Esophagus muscularis mucosa (tissue), 4 donors: ENCODE measurements at regions of chr11 and their contacts with region 1.

Region 1: DNA sequence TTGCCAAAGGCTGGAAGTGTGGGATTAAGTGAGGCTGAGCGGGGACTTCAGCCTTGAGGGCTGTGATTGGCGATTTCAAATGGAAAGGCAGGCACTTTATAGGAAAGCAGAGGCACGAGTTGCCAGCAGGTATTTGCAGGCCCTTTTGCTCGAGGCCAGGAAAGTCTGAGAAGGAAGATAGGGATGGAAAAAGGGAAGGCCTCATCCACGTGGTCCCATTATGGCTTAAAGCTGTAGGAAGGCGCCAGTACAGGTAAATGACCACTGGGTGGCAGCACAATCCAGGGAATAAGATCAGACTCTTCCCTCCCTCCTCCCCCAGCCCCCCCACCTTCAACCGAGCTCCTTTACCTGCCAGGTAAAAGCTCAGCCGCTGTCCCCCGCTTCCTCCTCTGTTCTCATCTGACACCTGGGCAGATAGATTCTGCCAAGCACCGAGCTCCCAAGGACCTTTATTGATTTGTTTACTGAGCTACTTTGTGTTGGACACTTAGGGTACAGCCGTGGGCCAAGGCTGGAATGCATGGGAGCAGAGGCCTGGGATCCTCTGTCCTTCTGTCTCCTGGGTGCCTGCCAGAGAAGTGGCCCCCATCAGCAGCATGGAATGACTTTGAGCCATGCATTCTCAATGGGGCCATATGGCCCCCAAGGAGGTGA is 7.5 kb downstream of the P2RX3 start:
- DNase-seq: no peak
- H3K4me3 ChIP-seq: no peak overlapping the region
- H3K27ac ChIP-seq: no peak overlapping the region
- H3K4me1 ChIP-seq: peaks cover 3 to 15% (median 10%) of the 10 kb centered on the region in 4 donors
- H3K27me3 ChIP-seq: no peaks in the 10 kb centered on the region
- CTCF ChIP-seq: peak; percentile 58 to 88 (median 82)
- EP300 ChIP-seq: no peak
- POLR2A ChIP-seq: no peak

Region 2: GRCh38 chr11:56841210-56841810 is 504.4 kb before region 1 on chr11:
- intact Hi-C with region 1: loop called (anchors 5 kb)
- DNase-seq: no peak
- H3K4me3 ChIP-seq: no peak overlapping the region
- H3K27ac ChIP-seq: no peak overlapping the region
- H3K4me1 ChIP-seq: peaks cover 0 to 4% (median 0%) of the 10 kb centered on the region in 4 donors
- H3K27me3 ChIP-seq: peaks cover 0 to 15% (median 2%) of the 10 kb centered on the region in 4 donors
- CTCF ChIP-seq: peak; percentile 58 to 67 (median 64)
- EP300 ChIP-seq: no peak
- POLR2A ChIP-seq: no peak

Region 3: DNA sequence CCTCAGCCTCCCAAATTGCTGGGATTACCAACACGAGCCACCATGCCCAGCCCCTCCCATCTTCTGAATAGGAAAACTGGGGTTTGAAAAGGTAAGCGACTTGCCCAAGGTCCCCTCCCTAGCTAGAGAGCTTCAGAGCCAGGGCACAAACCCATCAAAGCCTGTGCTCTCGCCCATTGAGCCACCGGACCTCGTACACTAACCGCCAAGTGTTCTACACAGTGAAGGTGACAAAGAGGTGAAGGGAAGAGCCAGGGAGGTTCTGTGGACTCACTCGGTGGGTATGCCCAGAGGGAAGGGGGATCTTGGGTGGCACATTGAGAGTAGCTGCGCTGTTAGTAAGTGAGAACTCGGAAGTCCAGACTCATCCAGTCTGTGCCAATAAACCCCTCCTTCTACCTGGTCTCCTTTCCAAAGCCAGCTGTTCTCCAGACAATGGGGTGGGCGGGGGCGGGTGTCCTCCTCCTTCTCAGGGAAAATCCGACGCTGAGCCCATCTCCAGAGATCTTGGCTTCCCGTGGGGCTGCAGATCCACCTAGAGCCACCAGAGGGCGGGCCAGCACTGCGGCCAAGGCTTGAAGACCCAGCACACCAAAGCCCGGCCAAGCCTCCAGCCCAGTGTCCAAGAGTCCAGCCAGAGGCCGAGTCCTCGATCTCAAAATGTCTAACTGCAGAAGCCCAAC is 111.4 kb after region 1 on chr11:
- intact Hi-C with region 1: loop called (anchors 10 kb)
- DNase-seq: peak; percentile 98
- H3K4me3 ChIP-seq: peak overlapping the region in 2 of 4 donors; percentile 52 to 64
- H3K27ac ChIP-seq: no peak overlapping the region
- H3K4me1 ChIP-seq: peaks cover 35 to 45% (median 45%) of the 10 kb centered on the region in 4 donors
- H3K27me3 ChIP-seq: peaks cover 0 to 63% (median 29%) of the 10 kb centered on the region in 4 donors
- CTCF ChIP-seq: peak in 2 of 3 experiments; percentile 98 to 99
- EP300 ChIP-seq: no peak
- POLR2A ChIP-seq: no peak

Region 4: DNA sequence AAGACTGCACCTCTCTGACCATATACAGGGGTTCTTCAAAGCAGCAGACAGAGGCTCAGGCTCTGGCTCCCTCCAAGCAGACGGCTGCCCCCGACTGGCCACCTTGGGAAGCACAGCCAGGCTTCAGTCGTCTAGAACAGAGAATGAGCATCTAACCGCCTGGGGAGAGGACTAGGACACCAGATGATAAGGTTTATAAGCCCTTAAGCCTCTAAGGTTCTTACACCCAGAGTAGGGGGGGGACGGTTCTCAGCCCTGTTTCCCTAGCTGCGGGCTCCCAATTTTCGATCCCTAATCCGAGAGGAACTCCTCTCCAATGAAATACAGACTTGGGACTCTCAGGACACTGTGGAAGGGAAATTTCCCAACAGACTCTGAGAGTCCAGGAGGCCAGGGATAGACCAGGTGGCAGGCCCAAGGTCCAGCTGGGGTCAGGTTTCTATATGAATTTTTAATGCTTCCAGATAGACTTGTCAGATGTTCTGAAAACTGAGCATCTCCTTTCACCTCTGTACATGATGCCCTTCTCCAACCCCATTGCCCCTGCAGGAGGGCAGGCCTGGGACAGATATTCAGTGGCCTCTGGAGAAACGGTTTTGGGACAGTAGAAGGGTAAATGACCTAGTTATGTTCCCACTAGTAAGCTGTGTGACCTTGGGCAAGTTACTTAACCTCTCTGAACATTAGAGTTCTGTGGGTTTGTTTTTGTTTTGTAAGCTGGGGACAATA is 134.9 kb after region 1 on chr11:
- intact Hi-C with region 1: loop called (anchors 5 kb)
- DNase-seq: no peak
- H3K4me3 ChIP-seq: no peak overlapping the region
- H3K27ac ChIP-seq: no peak overlapping the region
- H3K4me1 ChIP-seq: peaks cover 21 to 34% (median 31%) of the 10 kb centered on the region in 4 donors
- H3K27me3 ChIP-seq: peaks cover 0 to 55% (median 16%) of the 10 kb centered on the region in 4 donors
- CTCF ChIP-seq: peak; percentile 52 to 76 (median 61)
- EP300 ChIP-seq: no peak
- POLR2A ChIP-seq: no peak

Region 5: GRCh38 chr11:57527056-57527631 is 181.5 kb after region 1 on chr11:
- intact Hi-C with region 1: loop called (anchors 5 kb)
- DNase-seq: peak; percentile 93
- H3K4me3 ChIP-seq: no peak overlapping the region
- H3K27ac ChIP-seq: no peak overlapping the region
- H3K4me1 ChIP-seq: peaks cover 13 to 23% (median 21%) of the 10 kb centered on the region in 4 donors
- H3K27me3 ChIP-seq: no peaks in the 10 kb centered on the region
- CTCF ChIP-seq: peak; percentile 92 to 93 (median 92)
- EP300 ChIP-seq: no peak
- POLR2A ChIP-seq: no peak

Region 6: GRCh38 chr11:57644748-57645688 is 299.3 kb after region 1 on chr11:
- intact Hi-C with region 1: loop called (anchors 10 kb)
- DNase-seq: peak; percentile 97
- H3K4me3 ChIP-seq: no peak overlapping the region
- H3K27ac ChIP-seq: peak overlapping the region; percentile 32 to 64 (median 50)
- H3K4me1 ChIP-seq: peaks cover 60 to 78% (median 73%) of the 10 kb centered on the region in 4 donors
- H3K27me3 ChIP-seq: peaks cover 5 to 42% (median 33%) of the 10 kb centered on the region in 4 donors
- CTCF ChIP-seq: peak; percentile 76 to 93 (median 82)
- EP300 ChIP-seq: no peak
- POLR2A ChIP-seq: no peak